ENCODE measurements at regions of chr10 and their contacts with region 1.

Region 1: GRCh38 chr10:93235686-93236085 is 162.0 kb downstream of the CYP26A1 start:
- DNase-seq: no peak
- H3K4me3 ChIP-seq: no peak overlapping the region
- H3K27ac ChIP-seq: no peak overlapping the region
- H3K4me1 ChIP-seq: no peaks in the 10 kb centered on the region
- H3K27me3 ChIP-seq: no peaks in the 10 kb centered on the region
- CTCF ChIP-seq: no peak
- POLR2A ChIP-seq: no peak

Region 2: GRCh38 chr10:91665842-91666241 is 1569.8 kb before region 1 on chr10:
- intact Hi-C with region 1: loop called (anchors 5 kb)
- DNase-seq: no peak
- H3K4me3 ChIP-seq: no peak overlapping the region
- H3K27ac ChIP-seq: no peak overlapping the region
- H3K4me1 ChIP-seq: no peaks in the 10 kb centered on the region
- H3K27me3 ChIP-seq: no peaks in the 10 kb centered on the region
- CTCF ChIP-seq: no peak
- POLR2A ChIP-seq: no peak

Region 3: GRCh38 chr10:92699518-92700381 is 535.9 kb before region 1 on chr10:
- intact Hi-C with region 1: no loop called
- DNase-seq: no peak
- H3K4me3 ChIP-seq: peak overlapping the region; percentile 29
- H3K27ac ChIP-seq: no peak overlapping the region
- H3K4me1 ChIP-seq: peaks cover 22% of the 10 kb centered on the region
- H3K27me3 ChIP-seq: peaks cover 3% of the 10 kb centered on the region
- CTCF ChIP-seq: no peak
- POLR2A ChIP-seq: no peak

Region 4: GRCh38 chr10:93173967-93174845 is 61.5 kb before region 1 on chr10:
- intact Hi-C with region 1: no loop called
- DNase-seq: no peak
- H3K4me3 ChIP-seq: no peak overlapping the region
- H3K27ac ChIP-seq: no peak overlapping the region
- H3K4me1 ChIP-seq: no peaks in the 10 kb centered on the region
- H3K27me3 ChIP-seq: no peaks in the 10 kb centered on the region
- CTCF ChIP-seq: no peak
- POLR2A ChIP-seq: no peak

Region 5: GRCh38 chr10:94205396-94205831 is 969.7 kb after region 1 on chr10:
- intact Hi-C with region 1: no loop called
- DNase-seq: no peak
- H3K4me3 ChIP-seq: no peak overlapping the region
- H3K27ac ChIP-seq: no peak overlapping the region
- H3K4me1 ChIP-seq: peaks cover 7% of the 10 kb centered on the region
- H3K27me3 ChIP-seq: no peaks in the 10 kb centered on the region
- CTCF ChIP-seq: no peak
- POLR2A ChIP-seq: no peak

Measured in vagina (tissue), 2 donors.